ENCODE measurements at regions of chr19 and their contacts with region 1.

Region 1: DNA sequence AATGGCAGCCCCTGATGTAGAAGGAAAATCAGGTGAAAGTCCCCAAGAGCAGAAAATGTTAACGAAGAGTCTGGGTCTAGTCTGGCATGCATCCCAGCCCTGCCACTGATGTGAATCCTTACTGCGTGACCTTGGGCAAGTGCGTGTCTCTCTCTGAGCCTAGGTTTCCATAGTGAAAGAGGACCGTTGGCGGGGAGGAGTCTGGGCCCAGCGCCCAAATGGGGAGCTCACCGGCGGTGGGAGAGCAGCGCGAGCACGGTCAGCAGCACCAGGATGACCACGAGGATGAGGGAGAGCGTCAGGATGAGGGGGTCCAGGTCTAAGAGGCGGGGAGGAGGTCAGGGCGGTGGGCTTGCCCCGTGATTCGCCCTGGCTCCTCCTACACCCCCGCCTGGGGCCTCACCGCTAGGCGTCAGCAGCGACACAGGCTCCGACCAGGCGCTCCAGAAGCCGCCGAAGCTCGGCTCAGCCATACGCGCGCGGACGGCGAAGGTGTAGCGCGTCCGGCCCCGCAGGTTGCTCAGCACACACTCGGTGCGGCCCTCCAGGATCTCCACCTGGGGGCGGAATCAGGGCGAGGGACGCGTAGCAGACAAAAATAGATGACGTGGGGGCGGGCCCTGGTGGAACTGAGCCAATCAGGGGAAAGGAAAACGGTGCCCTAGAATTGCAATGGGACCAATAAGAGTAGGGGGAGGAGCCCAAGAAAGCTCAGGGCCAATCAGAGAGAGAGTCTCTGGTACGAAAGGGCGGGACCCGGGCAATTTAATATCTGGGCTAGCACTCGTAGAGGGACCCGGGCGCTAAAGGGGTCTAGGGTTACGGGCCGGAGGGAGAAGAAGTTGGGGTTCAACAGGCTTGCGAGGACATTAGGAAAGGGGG is 3.2 kb downstream of the EPOR start:
- DNase-seq: peak; percentile 95 to 99 (median 97)
- ATAC-seq: peak; percentile 86
- H3K4me3 ChIP-seq: peak overlapping the region; percentile 69
- H3K4me3 Mint-ChIP-seq: peak overlapping the region; percentile 93
- H3K27ac ChIP-seq: peak overlapping the region; percentile 88 to 92
- H3K27ac Mint-ChIP-seq: peak overlapping the region; percentile 92
- H3K4me1 ChIP-seq: peaks cover 70% of the 10 kb centered on the region
- H3K4me1 Mint-ChIP-seq: peaks cover 41% of the 10 kb centered on the region
- H3K27me3 ChIP-seq: peaks cover 21% of the 10 kb centered on the region in 2 experiments
- H3K27me3 Mint-ChIP-seq: peaks cover 25% of the 10 kb centered on the region
- CTCF ChIP-seq: peak; percentile 78

Region 2: DNA sequence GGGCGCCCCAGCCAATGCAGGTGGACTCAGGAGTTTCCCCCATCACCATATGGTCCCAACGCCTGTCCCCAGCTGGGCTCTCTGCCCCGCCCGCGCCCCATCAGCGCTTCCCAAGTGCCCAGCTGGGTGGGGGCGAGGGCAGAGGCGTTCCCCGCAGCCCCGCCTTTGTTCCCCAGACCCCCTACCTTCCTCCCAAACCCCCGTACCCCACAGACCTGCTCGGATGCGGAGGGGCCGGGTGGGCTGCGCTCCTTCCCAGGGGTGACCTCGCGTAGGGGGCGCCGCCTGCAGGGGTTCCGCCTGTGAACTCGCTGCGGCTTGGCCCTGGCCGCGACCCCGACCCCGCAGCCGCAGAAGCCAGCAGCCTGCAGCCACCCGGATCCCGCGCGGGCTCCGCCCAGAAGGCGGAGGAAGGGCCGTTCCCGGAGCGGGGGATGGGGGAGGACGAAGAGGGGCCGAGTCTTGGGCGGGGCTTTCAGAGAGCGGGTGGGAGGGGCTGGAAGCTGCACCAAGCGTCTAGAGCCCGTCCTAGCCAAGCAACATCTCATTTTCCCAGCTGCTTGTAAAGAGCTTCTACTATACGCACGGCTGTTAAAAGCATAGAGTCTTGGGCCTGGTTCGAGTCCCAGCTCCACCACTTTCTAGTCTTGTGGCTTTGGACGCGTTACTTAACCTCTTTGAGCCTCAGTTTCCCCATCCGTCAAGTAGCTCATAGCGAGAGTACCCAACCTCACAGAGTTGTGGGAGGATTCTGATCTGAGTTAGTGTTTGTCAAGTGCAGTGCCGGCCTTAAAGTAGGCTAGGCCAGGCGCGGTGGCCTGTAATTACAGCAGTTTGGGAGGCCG is 41.4 kb before region 1 on chr19 and contains the start of gene RAB3D:
- CTCF ChIA-PET with region 1: interaction called, 16 read pairs
- POLR2A ChIA-PET with region 1: interaction called, 16 read pairs
- intact Hi-C with region 1: no loop called
- DNase-seq: peak; percentile 43 to 92 (median 74)
- ATAC-seq: peak; percentile 82
- H3K4me3 ChIP-seq: peak within 1 kb of the TSS; percentile 63
- H3K4me3 Mint-ChIP-seq: peak within 1 kb of the TSS; percentile 85
- H3K27ac ChIP-seq: peak within 1 kb of the TSS in 1 of 2 donors; percentile 13
- H3K27ac Mint-ChIP-seq: peak within 1 kb of the TSS; percentile 62
- H3K4me1 ChIP-seq: peaks cover 37% of the 10 kb centered on the region
- H3K4me1 Mint-ChIP-seq: peaks cover 29% of the 10 kb centered on the region
- H3K27me3 ChIP-seq: no peaks in the 10 kb centered on the region
- H3K27me3 Mint-ChIP-seq: no peaks in the 10 kb centered on the region
- CTCF ChIP-seq: no peak
- total RNA-seq, gene RAB3D: 1.2 to 2.2 TPM

Region 3: DNA sequence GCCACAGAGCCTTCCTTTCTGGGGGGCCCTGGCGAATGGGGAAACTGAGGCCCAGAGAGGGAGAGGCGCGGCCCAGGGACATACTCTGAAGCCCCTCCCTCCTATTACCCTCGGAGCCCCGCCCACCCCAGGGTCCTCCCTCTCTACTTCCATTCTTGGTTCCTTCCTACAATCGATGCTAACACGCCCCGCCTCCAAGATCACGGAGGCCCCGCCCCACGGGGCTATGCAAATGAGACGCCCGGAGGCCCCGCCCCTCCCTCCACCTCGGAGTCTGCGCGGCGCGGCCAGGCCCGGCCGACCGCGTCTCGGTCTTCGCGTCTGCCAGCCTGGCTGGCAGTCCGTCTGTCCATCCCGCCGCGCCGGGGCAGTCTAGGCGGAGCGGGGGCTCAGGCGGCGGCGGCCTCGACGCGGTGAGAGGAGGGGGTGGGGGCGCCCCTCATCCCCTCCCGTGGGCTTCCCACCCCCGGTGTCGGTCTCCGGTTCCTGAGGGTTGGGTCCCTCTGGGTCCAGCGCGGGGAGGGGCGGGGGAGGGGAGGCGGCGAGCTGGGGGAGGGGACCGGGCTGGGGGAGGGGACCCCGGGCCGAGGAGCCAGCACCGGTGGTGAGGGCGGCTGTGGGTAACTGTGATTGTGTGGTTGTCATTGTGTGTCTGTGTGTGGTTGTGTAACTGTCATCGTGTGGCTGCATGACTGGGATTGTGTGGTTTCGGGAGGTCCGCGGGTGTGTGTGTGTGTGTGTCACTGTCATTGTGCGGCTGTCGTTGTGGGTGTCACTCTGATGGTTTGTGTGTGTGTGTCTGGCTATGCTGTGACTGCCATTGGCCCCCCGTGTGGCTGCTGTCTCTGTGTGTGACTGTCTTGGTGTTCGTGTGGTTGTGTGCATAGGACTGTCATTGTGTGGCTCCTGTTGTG is 25.5 kb before region 1 on chr19 and contains the start of gene PLPPR2:
- CTCF ChIA-PET with region 1: no interaction called
- POLR2A ChIA-PET with region 1: no interaction called
- intact Hi-C with region 1: no loop called
- DNase-seq: peak; percentile 65 to 93 (median 82)
- ATAC-seq: peak; percentile 98
- H3K4me3 ChIP-seq: peak within 1 kb of the TSS; percentile 36
- H3K4me3 Mint-ChIP-seq: peak within 1 kb of the TSS; percentile 68
- H3K27ac ChIP-seq: no peak within 1 kb of the TSS
- H3K27ac Mint-ChIP-seq: no peak within 1 kb of the TSS
- H3K4me1 ChIP-seq: peaks cover 19% of the 10 kb centered on the region
- H3K4me1 Mint-ChIP-seq: peaks cover 10% of the 10 kb centered on the region
- H3K27me3 ChIP-seq: no peaks in the 10 kb centered on the region
- H3K27me3 Mint-ChIP-seq: peaks cover 5% of the 10 kb centered on the region
- CTCF ChIP-seq: no peak
- total RNA-seq, gene PLPPR2: 8.2 TPM

Region 4: DNA sequence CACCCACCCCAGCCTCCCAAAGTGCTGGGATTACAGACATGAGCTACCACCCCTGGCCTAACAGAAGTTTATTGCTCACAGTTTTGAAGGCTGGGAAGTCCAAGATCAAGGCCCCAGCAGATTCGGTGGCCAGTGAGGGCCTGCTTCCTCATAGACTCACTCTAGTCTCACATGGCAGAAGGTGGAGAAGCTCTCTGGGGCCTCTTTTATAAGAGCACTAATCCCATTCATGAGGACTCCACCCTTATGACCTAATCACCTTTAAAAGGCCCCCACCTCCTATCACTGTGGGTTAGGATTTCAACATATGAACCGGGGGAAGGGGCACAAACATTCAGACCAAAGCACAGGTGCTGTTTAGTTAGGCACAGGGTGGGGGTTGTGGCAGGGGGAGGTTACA is 13.4 kb before region 1 on chr19:
- CTCF ChIA-PET with region 1: interaction called, 18 read pairs
- POLR2A ChIA-PET with region 1: interaction called, 3 read pairs
- intact Hi-C with region 1: no loop called
- DNase-seq: no peak
- ATAC-seq: no peak
- H3K4me3 ChIP-seq: no peak overlapping the region
- H3K4me3 Mint-ChIP-seq: no peak overlapping the region
- H3K27ac ChIP-seq: no peak overlapping the region
- H3K27ac Mint-ChIP-seq: no peak overlapping the region
- H3K4me1 ChIP-seq: no peaks in the 10 kb centered on the region
- H3K4me1 Mint-ChIP-seq: no peaks in the 10 kb centered on the region
- H3K27me3 ChIP-seq: no peaks in the 10 kb centered on the region
- H3K27me3 Mint-ChIP-seq: no peaks in the 10 kb centered on the region
- CTCF ChIP-seq: no peak

Region 5: DNA sequence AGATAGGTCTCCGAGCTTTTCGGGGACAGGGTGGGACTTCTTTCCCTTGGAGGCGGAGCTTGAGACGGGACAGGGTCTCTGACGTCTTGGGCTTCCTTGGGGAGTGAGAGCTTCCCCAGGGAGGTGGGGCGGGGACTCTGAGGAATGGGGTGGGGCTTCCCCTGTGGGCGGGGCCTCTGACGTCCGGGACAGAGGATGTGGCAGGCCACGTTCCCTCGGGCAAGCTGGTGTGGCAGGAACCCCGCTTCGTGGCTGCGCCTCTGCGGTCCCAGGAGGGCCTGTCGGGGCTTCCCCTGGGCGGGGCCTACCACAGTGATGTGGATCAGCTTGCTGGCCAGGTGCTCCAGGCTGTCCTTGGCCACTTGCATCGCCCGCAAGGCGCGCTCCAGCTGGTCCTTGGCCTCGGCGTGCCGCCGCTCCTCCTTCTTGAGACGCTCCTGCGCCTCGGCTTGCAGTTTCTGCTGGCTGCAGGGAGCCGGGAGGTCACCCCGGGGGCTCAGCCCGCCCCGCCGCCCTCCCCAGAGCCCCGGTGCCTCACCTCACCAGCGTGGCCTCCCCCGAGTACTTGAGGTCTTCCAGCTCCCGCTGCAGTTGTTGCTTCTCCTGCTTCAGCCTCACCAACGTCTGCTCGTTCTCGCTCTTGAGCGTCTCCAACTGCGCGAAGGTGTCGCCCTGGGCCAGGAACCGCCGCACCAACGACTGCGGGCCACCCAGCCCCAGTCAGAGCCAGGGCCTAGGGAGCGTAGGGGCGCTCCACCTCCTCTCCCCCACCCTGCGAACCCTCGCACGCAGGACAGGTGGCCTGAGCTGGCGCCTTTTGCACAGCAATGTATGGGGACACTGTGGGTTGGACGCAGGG is 41.5 kb after region 1 on chr19:
- CTCF ChIA-PET with region 1: interaction called, 20 read pairs
- POLR2A ChIA-PET with region 1: interaction called, 19 read pairs
- intact Hi-C with region 1: loop called in 1 of 2 experiments (anchors 2 kb)
- DNase-seq: peak; percentile 24 to 85 (median 48)
- ATAC-seq: peak; percentile 59
- H3K4me3 ChIP-seq: peak overlapping the region; percentile 37
- H3K4me3 Mint-ChIP-seq: peak overlapping the region; percentile 83
- H3K27ac ChIP-seq: no peak overlapping the region
- H3K27ac Mint-ChIP-seq: no peak overlapping the region
- H3K4me1 ChIP-seq: peaks cover 52% of the 10 kb centered on the region
- H3K4me1 Mint-ChIP-seq: peaks cover 43% of the 10 kb centered on the region
- H3K27me3 ChIP-seq: peaks cover 51 to 57% of the 10 kb centered on the region in 2 experiments
- H3K27me3 Mint-ChIP-seq: peaks cover 62% of the 10 kb centered on the region
- CTCF ChIP-seq: no peak

Region 6: GRCh38 chr19:11482384-11483050 is 101.6 kb after region 1 on chr19:
- CTCF ChIA-PET with region 1: interaction called, 28 read pairs
- POLR2A ChIA-PET with region 1: interaction called, 15 read pairs
- intact Hi-C with region 1: loop called (anchors 1 to 2 kb)
- DNase-seq: peak; percentile 58 to 95 (median 78)
- ATAC-seq: peak; percentile 73
- H3K4me3 ChIP-seq: peak overlapping the region; percentile 7
- H3K4me3 Mint-ChIP-seq: peak overlapping the region; percentile 2
- H3K27ac ChIP-seq: no peak overlapping the region
- H3K27ac Mint-ChIP-seq: no peak overlapping the region
- H3K4me1 ChIP-seq: peaks cover 36% of the 10 kb centered on the region
- H3K4me1 Mint-ChIP-seq: peaks cover 22% of the 10 kb centered on the region
- H3K27me3 ChIP-seq: peaks cover 27 to 35% of the 10 kb centered on the region in 2 experiments
- H3K27me3 Mint-ChIP-seq: peaks cover 52% of the 10 kb centered on the region
- CTCF ChIP-seq: peak; percentile 82

Region 7: DNA sequence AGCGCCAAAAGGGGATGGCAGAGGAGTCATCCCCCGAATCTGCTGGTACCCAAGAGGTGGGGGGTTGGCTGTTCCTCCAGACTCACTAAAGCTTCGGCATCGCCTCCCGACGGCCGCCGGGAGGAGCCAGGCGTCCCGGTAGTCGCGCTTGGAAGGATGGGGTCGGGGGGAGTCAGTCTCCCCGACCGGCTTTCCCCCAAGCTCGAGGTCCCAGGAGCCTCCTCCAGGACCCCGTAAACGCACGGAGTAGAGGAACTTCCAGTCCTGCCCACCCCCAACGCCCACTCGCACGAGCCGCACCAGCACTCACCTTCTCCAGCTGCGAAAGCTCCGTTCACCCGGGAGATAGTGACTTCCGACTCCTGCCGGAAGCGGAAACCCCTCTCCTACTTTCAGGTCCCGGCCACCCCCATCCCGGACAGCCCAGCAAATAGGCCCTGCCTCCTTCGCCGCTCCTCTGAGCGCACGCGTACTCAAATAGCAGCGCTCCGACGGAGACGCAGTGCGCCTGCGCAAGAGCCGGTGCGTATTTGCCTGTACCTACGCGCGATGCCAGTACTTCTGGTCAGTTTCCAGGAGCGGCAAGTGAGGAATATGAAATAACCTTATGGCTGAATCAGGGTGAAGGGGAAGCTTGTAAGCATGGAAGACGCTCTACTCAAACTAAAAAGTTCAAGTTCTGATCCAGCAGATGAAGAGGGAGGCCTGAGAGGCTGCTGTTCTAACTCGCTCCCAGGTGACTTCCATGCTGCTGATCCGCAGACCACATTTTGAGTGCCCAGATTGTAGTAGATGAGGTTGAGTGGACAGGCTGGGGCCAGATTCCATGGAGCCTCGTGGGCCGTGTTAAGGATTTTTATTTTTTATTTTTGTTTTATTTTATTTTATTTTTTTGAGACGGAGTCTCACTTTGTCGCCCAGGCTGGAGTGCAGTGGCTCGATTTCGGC is 178.3 kb after region 1 on chr19 and contains the start of gene ELOF1:
- CTCF ChIA-PET with region 1: interaction called, 5 read pairs
- POLR2A ChIA-PET with region 1: interaction called, 11 read pairs
- intact Hi-C with region 1: no loop called
- DNase-seq: peak; percentile 90 to 99 (median 96)
- ATAC-seq: peak; percentile 93
- H3K4me3 ChIP-seq: peak within 1 kb of the TSS; percentile 94
- H3K4me3 Mint-ChIP-seq: peak within 1 kb of the TSS; percentile 96
- H3K27ac ChIP-seq: peak within 1 kb of the TSS; percentile 47 to 64
- H3K27ac Mint-ChIP-seq: peak within 1 kb of the TSS; percentile 79
- H3K4me1 ChIP-seq: peaks cover 40% of the 10 kb centered on the region
- H3K4me1 Mint-ChIP-seq: peaks cover 41% of the 10 kb centered on the region
- H3K27me3 ChIP-seq: no peaks in the 10 kb centered on the region
- H3K27me3 Mint-ChIP-seq: no peaks in the 10 kb centered on the region
- CTCF ChIP-seq: no peak
- total RNA-seq, gene ELOF1: 31.8 to 33.2 TPM